IMR-90 (cell line): ENCODE measurements at regions of chr9 and their contacts with region 1.

Region 1: GRCh38 chr9:135716045-135716444 is 14.1 kb downstream of the KCNT1 start:
- DNase-seq: no peak
- ATAC-seq: no peak
- H3K4me3 ChIP-seq: no peak overlapping the region
- H3K27ac ChIP-seq: no peak overlapping the region
- H3K4me1 ChIP-seq: no peaks in the 10 kb centered on the region
- H3K27me3 ChIP-seq: peaks cover 29% of the 10 kb centered on the region
- CTCF ChIP-seq: no peak
- POLR2A ChIP-seq: no peak
- RAD21 ChIP-seq: no peak

Region 2: DNA sequence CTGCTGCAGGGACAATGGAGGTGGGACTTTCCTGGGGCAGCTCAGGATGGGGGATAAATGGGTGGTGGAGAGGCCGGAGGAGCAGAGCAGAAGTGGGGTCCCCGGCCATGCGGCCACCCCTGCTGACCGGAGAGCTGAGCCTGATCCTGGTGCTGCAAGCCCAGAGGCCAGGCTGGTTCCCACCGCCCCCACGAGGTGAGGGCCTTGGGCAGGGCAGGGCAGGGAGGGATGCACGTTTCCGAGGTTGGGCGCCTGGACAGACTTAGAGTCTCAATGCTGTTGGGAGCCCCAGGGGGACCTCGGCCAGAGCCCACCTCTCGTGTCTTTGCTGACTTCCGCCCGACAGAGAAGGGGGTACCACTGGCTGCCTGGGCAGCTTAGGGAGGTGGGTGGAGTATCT is 164.6 kb before region 1 on chr9:
- CTCF ChIA-PET with region 1: no interaction called
- POLR2A ChIA-PET with region 1: interaction called, 16 read pairs
- dilution Hi-C with region 1: no loop called
- in situ Hi-C with region 1: no loop called
- intact Hi-C with region 1: no loop called
- DNase-seq: no peak
- ATAC-seq: no peak
- H3K4me3 ChIP-seq: no peak overlapping the region
- H3K27ac ChIP-seq: no peak overlapping the region
- H3K4me1 ChIP-seq: no peaks in the 10 kb centered on the region
- H3K27me3 ChIP-seq: no peaks in the 10 kb centered on the region; the same call in 1 of the 2 replicates
- CTCF ChIP-seq: no peak
- POLR2A ChIP-seq: no peak
- RAD21 ChIP-seq: no peak